Activated naive CD4-positive, alpha-beta T cell treated with anti-CD3 and anti-CD28 coated beads for 36 hours (primary cell): ENCODE measurements at regions of chr7 and their contacts with region 1.

Region 1: DNA sequence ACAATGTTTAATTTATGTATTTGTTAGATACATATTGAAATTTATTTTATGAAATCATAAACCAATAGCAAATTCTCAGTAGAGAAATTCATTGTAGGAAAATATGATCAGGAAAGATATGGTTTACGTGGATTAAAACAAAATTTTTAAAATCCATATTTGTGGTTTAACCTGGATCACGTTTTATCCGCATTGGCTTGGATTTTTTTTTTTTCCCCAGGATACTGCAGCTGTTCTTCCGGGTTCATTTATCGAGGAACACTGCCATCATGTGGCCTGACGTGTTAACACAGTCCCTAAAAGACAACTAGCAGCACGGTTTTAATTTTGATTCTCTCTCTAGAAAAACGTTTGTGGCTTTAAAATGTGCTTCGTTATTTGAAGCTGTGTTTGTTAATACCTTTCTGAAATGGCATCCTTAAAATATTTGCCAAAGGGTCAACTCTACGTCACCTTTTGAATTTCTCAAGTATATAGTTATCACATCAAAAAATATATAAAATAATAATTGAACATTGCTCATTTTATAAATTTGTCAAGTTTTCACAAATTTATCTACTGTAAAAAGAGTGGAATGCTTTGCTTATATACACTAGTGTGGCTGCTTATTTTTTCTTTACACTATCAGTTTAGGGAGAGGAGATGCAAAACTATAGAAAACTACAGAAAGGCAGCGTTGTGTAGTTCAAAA is 8.7 kb upstream of the ASB4 start:
- DNase-seq: peak; percentile 73
- H3K4me3 Mint-ChIP-seq: no peak overlapping the region
- H3K27ac Mint-ChIP-seq: no peak overlapping the region
- H3K4me1 Mint-ChIP-seq: no peaks in the 10 kb centered on the region
- H3K27me3 Mint-ChIP-seq: peaks cover 11% of the 10 kb centered on the region

Region 2: GRCh38 chr7:94509879-94510581 is 967.0 kb before region 1 on chr7:
- CTCF ChIA-PET with region 1: no interaction called
- intact Hi-C with region 1: loop called (anchors 10 kb)
- DNase-seq: peak; percentile 66
- H3K4me3 Mint-ChIP-seq: peak overlapping the region; percentile 78
- H3K27ac Mint-ChIP-seq: peak overlapping the region; percentile 83
- H3K4me1 Mint-ChIP-seq: peaks cover 41% of the 10 kb centered on the region
- H3K27me3 Mint-ChIP-seq: no peaks in the 10 kb centered on the region

Region 3: DNA sequence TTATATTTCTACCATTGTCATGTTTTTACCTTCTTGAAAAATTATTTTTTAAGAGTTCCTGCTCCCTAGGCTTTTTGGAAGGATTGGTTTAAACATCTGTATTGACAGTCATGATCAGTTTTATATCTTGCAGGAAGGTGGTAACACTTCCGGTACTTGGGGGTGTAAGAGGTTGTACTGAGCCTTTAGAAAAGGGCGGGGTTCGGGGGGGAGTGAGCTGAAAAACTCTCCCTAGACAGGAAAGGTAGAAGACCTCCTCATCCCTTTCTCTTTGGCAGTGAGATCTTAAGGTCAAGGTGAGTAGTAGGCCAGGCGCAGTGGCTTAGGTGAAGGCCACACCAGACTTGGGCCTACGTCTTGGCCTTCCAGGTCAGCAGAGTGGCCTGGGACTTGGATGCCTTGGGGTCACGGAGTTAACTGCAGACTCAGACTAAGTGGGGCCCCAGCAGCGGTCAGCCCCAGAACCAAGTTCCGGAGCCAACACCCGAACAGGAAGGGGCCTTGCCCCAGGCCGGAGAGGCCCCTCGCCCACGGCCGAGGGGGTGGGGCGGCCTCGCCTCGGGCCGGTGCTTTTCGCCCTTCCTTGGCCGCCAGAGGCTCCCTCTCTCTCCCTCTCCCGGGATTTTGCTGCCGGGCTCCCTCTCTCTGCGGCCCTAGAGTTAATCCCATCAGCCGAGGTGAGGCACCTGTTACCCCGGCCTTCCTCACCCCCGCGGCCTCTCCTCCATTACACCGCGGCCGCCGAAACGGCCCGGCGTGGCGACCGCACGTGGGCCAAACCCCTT is 569.8 kb before region 1 on chr7 and contains the start of gene PPP1R9A:
- CTCF ChIA-PET with region 1: no interaction called
- intact Hi-C with region 1: loop called (anchors 10 kb)
- DNase-seq: no peak
- H3K4me3 Mint-ChIP-seq: peak within 1 kb of the TSS; percentile 15
- H3K27ac Mint-ChIP-seq: no peak within 1 kb of the TSS
- H3K4me1 Mint-ChIP-seq: peaks cover 3% of the 10 kb centered on the region
- H3K27me3 Mint-ChIP-seq: peaks cover 40% of the 10 kb centered on the region
- total RNA-seq, gene PPP1R9A: not detected

Region 4: DNA sequence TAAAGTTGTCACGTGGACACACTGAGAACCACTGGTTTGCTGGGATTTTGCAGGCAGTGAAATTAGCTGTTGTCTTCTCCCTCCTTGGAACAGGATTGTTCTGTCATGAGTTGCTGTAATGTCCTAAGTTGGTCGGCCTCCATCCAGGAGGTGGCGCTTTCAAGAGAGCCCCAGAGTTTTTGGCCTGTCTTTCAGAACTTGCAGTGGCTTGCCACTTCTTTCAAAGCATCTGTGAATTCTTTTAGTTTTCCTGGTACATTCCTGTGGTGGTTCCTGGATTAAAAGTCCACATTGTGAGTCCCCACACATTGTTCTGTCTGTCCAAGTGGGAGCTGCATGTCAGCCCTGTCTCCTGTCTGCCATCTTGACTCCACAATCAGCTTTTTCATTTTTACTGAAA is 286.5 kb before region 1 on chr7:
- CTCF ChIA-PET with region 1: interaction called, 4 read pairs
- intact Hi-C with region 1: loop called (anchors 2 kb)
- DNase-seq: no peak
- H3K4me3 Mint-ChIP-seq: no peak overlapping the region
- H3K27ac Mint-ChIP-seq: no peak overlapping the region
- H3K4me1 Mint-ChIP-seq: no peaks in the 10 kb centered on the region
- H3K27me3 Mint-ChIP-seq: no peaks in the 10 kb centered on the region

Region 5: GRCh38 chr7:95330204-95330960 is 146.7 kb before region 1 on chr7:
- CTCF ChIA-PET with region 1: no interaction called
- intact Hi-C with region 1: loop called (anchors 10 kb)
- DNase-seq: no peak
- H3K4me3 Mint-ChIP-seq: peak overlapping the region; percentile 61
- H3K27ac Mint-ChIP-seq: no peak overlapping the region
- H3K4me1 Mint-ChIP-seq: peaks cover 10% of the 10 kb centered on the region
- H3K27me3 Mint-ChIP-seq: no peaks in the 10 kb centered on the region

Region 6: DNA sequence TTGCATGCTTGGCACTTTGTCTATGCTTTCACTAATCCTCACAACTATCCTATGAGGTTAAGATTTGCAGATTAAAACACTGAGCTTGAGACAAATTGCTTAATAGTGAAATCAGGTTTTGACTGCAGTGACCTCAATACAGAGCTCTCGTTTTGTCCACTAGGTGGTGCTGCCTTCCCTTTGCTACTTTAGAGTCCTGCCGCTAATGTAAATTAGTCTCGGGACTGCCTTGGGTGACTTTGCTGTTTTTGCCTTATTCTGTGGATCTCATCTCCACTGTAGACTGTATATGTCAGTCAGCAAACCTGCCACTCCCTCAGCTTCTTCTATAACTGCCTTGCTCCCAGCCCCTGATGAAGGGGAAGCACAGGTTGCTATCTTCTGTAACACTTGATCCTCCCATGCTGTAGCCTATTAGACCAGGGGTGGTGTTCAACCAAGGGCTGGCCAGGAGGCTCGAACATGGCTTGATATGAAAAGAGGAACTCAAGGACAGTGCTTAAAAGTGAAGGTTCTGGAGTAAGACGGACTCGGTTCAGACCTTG is 34.7 kb after region 1 on chr7:
- CTCF ChIA-PET with region 1: interaction called, 10 read pairs
- intact Hi-C with region 1: no loop called
- DNase-seq: peak; percentile 76
- H3K4me3 Mint-ChIP-seq: no peak overlapping the region
- H3K27ac Mint-ChIP-seq: no peak overlapping the region
- H3K4me1 Mint-ChIP-seq: no peaks in the 10 kb centered on the region
- H3K27me3 Mint-ChIP-seq: peaks cover 15% of the 10 kb centered on the region